ENCODE measurements at regions of chr5 and their contacts with region 1.

Region 1: DNA sequence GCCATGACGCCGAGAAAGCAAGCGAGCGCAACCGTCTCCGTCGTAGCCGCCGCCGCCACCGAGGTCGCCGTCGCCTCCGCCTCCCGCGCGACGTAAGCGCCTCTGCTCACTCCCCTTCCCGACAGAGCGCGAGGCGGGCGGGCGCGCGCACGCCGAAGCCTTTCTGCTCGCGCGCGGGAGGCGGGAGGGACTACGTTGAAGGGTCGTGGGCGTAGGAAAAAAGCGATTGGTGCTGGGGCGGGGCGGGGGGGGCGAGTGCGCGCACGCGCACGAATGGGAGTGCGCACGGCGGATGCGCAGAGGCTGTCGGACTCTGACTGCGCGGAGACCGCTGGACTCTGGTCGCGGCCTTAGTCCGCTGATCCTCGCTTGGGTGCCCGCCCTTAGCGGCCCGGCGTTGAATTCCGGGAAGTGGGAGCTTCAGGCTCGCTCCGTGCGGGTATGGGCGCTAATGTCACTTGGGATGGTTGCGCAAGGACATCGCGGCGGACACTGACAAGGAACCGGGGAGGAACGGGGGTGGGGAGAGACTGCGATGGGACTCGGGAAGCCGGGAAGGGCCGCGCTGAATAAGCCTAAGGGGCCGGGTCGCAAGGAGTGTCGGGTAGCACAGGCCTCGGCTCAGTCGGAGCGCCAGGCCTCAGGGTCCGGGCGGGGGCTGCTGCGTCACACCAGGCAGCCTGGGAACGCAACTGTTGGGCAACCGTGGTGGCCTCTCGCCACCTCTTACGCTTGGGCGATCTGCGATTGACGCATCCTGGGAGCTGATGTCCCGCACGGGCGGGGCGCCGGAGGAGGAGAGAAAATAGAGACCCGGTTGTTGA is at the start of gene CHD1:
- ATAC-seq: peak; percentile 69 to 85 (median 80)
- H3K4me3 ChIP-seq: peak within 1 kb of the TSS; percentile 78 to 93 (median 82)
- H3K27ac ChIP-seq: peak within 1 kb of the TSS; percentile 98 to 99
- H3K4me1 ChIP-seq: peaks cover 0 to 10% of the 10 kb centered on the region in 2 donors
- total RNA-seq, gene CHD1: 29.9 to 81.4 (median 50.0) TPM

Region 2: GRCh38 chr5:99032234-99033013 is 103.3 kb after region 1 on chr5:
- in situ Hi-C with region 1: loop called in 3 of 9 experiments (anchors 25 kb)
- ATAC-seq: peak; percentile 57 to 94 (median 80)
- H3K4me3 ChIP-seq: no peak overlapping the region
- H3K27ac ChIP-seq: no peak overlapping the region
- H3K4me1 ChIP-seq: peaks cover 0 to 4% of the 10 kb centered on the region in 2 donors